Activated naive CD8-positive, alpha-beta T cell treated with anti-CD3 and anti-CD28 coated beads, Interleukin-2, amount 10 ng/mL, durations not matched to agents 7 days and 5 days (primary cell): ENCODE measurements at regions of chr17 and their contacts with region 1.

Region 1: GRCh38 chr17:49217651-49218413 is 7.3 kb downstream of the ABI3 start:
- DNase-seq: peak; percentile 77
- ATAC-seq: peak; percentile 61
- H3K4me3 Mint-ChIP-seq: peak overlapping the region; percentile 85
- H3K27ac Mint-ChIP-seq: peak overlapping the region; percentile 92
- H3K4me1 Mint-ChIP-seq: peaks cover 64% of the 10 kb centered on the region
- H3K27me3 Mint-ChIP-seq: no peaks in the 10 kb centered on the region

Region 2: DNA sequence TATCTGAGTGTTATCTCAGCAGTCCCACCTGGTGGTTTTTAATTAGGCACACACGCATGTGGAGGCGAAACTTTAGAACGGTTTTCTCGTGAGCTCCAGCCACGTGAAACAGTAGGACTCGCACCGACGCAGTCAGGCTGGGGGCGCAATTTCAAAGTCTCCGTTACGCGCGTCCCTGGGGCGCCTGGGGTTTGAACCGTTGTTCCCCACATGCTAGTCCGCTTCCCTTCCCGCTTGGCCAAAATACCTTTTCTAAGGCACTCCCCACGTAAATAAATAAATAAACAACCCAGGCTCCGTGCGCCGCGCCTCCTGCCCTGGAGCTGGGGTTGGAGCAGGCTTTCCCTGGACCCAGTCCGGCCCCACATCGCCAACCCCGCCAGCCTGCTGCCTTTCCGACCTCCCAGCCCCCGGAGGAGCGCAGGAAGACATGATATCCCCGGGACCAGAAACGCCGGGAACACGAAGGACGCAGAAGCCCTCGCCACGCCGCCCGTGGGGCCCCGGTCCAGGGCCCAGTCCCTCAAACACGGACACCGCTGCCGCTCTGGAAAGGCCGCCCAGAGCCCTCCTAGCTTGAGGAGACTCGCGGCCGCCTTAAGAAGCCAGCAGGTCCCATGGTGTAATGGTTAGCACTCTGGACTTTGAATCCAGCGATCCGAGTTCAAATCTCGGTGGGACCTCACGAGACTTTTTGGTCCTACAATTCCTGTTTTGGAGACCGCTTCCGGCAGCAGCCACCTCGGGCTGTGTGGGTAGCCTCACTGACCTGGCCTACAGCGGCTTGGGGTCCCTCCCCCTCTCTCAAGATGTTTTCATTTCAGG is 25.7 kb before region 1 on chr17:
- POLR2A ChIA-PET with region 1: interaction called, 120 read pairs
- DNase-seq: peak; percentile 96
- ATAC-seq: peak; percentile 50
- H3K4me3 Mint-ChIP-seq: peak overlapping the region; percentile 91
- H3K27ac Mint-ChIP-seq: peak overlapping the region; percentile 100
- H3K4me1 Mint-ChIP-seq: peaks cover 34% of the 10 kb centered on the region
- H3K27me3 Mint-ChIP-seq: peaks cover 1% of the 10 kb centered on the region